Left lung (tissue), 14 donors: ENCODE measurements at regions of chr5 and their contacts with region 1.

Region 1: GRCh38 chr5:39076757-39077728 is 2.8 kb upstream of the RICTOR start:
- DNase-seq: no peak
- ATAC-seq: no peak
- H3K4me3 ChIP-seq: peak overlapping the region in 1 of 2 donors; percentile 3
- H3K27ac ChIP-seq: peak overlapping the region; percentile 8 to 78
- H3K4me1 ChIP-seq: peaks cover 15 to 42% of the 10 kb centered on the region in 2 donors
- H3K27me3 ChIP-seq: no peaks in the 10 kb centered on the region
- CTCF ChIP-seq: no peak

Region 2: GRCh38 chr5:38916802-38917201 is 160.2 kb before region 1 on chr5:
- intact Hi-C with region 1: no loop called
- DNase-seq: no peak
- ATAC-seq: no peak
- H3K4me3 ChIP-seq: no peak overlapping the region
- H3K27ac ChIP-seq: no peak overlapping the region
- H3K4me1 ChIP-seq: no peaks in the 10 kb centered on the region
- H3K27me3 ChIP-seq: no peaks in the 10 kb centered on the region
- CTCF ChIP-seq: no peak

Region 3: GRCh38 chr5:38997591-38997990 is 79.5 kb before region 1 on chr5:
- intact Hi-C with region 1: loop called in 1 of 2 experiments (anchors 5 kb)
- DNase-seq: no peak
- ATAC-seq: no peak
- H3K4me3 ChIP-seq: no peak overlapping the region
- H3K27ac ChIP-seq: no peak overlapping the region
- H3K4me1 ChIP-seq: peaks cover 0 to 7% of the 10 kb centered on the region in 2 donors
- H3K27me3 ChIP-seq: no peaks in the 10 kb centered on the region
- CTCF ChIP-seq: no peak